ENCODE measurements at regions of chr19 and their contacts with region 1.

Region 1: GRCh38 chr19:42280192-42281145 is 11.4 kb downstream of the CIC start:
- DNase-seq: peak; percentile 95
- ATAC-seq: peak; percentile 73

Region 2: GRCh38 chr19:42246143-42246921 is 34.1 kb before region 1 on chr19:
- intact Hi-C with region 1: loop called (anchors 2 kb)
- DNase-seq: peak; percentile 81
- ATAC-seq: peak; percentile 8

Measured in Right ventricle myocardium superior (tissue), 1 donor.